Panc1 (cell line): ENCODE measurements at regions of chr4 and their contacts with region 1.

Region 1: DNA sequence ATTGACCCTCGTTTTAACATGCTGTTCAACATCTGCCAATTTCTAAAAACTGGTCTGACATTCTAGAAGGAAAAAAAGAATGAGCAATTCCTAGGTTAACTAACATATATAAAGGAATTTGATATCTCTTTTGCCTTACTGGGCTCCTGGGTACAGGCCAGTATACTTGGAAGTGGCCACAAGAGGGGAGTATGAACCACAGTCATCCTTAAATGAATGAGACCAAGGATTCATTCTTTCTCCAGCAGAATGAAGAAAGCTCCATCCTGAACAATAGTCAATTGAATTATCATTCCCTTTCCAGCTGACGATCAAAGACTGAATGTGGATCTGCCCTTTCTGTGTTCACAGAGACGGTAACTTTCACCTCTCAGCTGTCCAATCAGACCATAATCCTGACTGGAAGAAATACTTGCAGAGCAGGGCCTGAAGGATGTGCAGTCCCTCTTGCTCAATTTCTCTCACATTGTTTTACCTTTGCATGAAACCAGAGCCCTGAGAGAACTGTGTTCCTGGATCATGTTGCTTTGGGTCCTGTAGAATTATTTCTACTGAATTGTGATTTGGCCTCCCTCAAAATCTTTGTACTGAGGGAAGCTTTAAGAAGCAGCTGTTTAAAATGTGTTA is 14.8 kb upstream of the SPARCL1 start:
- DNase-seq: no peak
- ATAC-seq: peak; percentile 80
- H3K4me3 ChIP-seq: no peak overlapping the region
- H3K27ac ChIP-seq: no peak overlapping the region
- H3K4me1 ChIP-seq: no peaks in the 10 kb centered on the region
- H3K27me3 ChIP-seq: no peaks in the 10 kb centered on the region
- CTCF ChIP-seq: peak; percentile 71

Region 2: DNA sequence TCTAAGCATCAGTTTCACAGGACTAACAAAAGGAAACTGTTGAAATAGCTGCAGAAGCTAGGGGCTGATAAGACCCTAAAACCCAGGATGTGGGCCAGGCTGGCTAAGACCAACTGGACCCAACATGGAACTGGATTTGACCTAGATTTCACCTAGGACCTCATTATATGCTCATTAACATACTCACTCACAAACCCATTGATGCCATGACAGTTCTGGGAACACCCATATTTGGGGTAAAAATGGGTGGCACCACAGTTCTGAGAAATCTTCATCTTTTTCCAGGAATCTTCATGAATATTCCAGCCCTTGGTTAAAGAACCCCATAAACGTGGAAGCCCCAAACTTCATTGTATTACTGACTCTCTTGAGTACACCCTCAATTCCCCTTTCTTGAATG is 262.3 kb before region 1 on chr4:
- CTCF ChIA-PET with region 1: no interaction called
- POLR2A ChIA-PET with region 1: no interaction called
- in situ Hi-C with region 1: no loop called
- intact Hi-C with region 1: no loop called
- DNase-seq: no peak
- ATAC-seq: no peak
- H3K4me3 ChIP-seq: no peak overlapping the region
- H3K27ac ChIP-seq: no peak overlapping the region
- H3K4me1 ChIP-seq: no peaks in the 10 kb centered on the region
- H3K27me3 ChIP-seq: no peaks in the 10 kb centered on the region
- CTCF ChIP-seq: no peak

Region 3: DNA sequence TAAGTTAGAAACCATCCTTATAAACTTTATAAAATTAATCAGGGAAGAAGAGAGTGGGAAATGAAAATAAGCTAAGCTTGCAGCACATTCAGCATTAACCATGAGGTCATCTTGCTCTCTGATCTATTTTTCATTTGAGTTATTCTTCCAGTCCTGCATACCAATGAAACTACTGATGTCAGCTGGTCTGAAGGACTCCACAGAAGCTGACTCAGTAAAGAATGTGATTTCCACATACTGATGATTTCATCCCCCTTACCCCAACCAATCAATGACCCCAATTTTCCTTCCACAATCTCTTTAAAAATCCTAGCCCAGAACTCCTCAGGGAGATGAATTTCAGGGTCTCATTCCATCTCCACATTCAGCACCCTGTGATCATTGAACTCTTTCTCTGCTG is 45.6 kb after region 1 on chr4:
- CTCF ChIA-PET with region 1: no interaction called
- POLR2A ChIA-PET with region 1: no interaction called
- in situ Hi-C with region 1: no loop called
- intact Hi-C with region 1: no loop called
- DNase-seq: no peak
- ATAC-seq: no peak
- H3K4me3 ChIP-seq: no peak overlapping the region
- H3K27ac ChIP-seq: no peak overlapping the region
- H3K4me1 ChIP-seq: no peaks in the 10 kb centered on the region
- H3K27me3 ChIP-seq: no peaks in the 10 kb centered on the region
- CTCF ChIP-seq: no peak

Region 4: GRCh38 chr4:87838890-87839591 is 295.1 kb after region 1 on chr4:
- CTCF ChIA-PET with region 1: no interaction called
- POLR2A ChIA-PET with region 1: no interaction called
- in situ Hi-C with region 1: no loop called
- intact Hi-C with region 1: loop called (anchors 2 kb)
- DNase-seq: no peak
- ATAC-seq: no peak; the same call in 1 of the 2 replicates
- H3K4me3 ChIP-seq: no peak overlapping the region
- H3K27ac ChIP-seq: no peak overlapping the region
- H3K4me1 ChIP-seq: no peaks in the 10 kb centered on the region
- H3K27me3 ChIP-seq: no peaks in the 10 kb centered on the region; the same call in 1 of the 2 replicates
- CTCF ChIP-seq: peak; percentile 69